B cell (primary cell): ENCODE measurements at regions of chr19 and their contacts with region 1.

Region 1: DNA sequence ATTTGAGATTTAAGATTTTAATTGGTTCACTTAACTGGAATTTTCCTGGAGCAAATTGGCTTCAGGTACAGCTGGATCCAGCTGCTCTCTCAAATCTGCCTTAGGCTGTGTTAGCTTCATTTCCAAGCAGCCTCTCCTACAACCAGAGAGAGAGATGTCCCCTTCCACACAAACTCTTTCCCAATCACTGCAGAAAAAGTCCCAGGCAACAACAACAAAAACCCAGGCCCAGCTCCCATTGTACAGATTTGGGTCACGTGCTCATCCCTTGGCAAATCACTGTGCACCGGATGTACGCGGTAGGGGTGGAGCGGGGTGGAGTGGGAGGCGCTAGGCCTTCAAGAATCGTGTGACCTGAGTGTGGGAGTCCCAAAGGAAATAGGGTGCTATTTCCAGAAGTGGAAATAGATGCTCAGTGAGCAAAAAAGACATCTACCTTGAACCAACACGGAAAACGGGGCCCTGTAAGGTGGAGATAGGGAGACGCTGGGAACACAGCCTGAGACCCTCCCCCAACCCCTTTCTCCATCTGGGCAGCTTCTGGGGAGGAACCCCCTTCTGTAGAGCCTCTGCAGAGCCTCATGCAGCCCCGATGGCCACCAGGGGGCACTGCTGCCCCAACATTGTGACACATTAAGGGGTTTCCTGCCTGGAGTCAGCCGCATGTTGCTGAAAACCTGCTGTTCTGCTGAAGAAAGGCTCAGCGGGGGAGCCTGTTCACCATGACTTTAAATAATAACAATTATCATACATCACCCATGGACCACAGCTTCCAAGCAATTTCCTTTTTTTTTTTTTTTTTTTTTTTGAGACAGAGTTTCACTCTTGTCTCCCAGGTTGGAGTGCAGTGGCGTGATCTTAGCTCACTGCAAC is 25.4 kb downstream of the HPN start:
- DNase-seq: peak; percentile 92
- ATAC-seq: peak; percentile 87
- H3K4me3 ChIP-seq: no peak overlapping the region
- H3K4me3 Mint-ChIP-seq: peak overlapping the region; percentile 39
- H3K27ac ChIP-seq: no peak overlapping the region
- H3K27ac Mint-ChIP-seq: peak overlapping the region; percentile 65
- H3K4me1 ChIP-seq: peaks cover 13 to 29% of the 10 kb centered on the region in 2 donors
- H3K4me1 Mint-ChIP-seq: peaks cover 29% of the 10 kb centered on the region
- H3K27me3 ChIP-seq: no peaks in the 10 kb centered on the region
- H3K27me3 Mint-ChIP-seq: no peaks in the 10 kb centered on the region
- CTCF ChIP-seq: peak; percentile 92

Region 2: GRCh38 chr19:34881982-34882381 is 184.9 kb before region 1 on chr19:
- CTCF ChIA-PET with region 1: no interaction called
- POLR2A ChIA-PET with region 1: no interaction called
- intact Hi-C with region 1: no loop called
- DNase-seq: no peak
- ATAC-seq: no peak
- H3K4me3 ChIP-seq: no peak overlapping the region
- H3K4me3 Mint-ChIP-seq: no peak overlapping the region
- H3K27ac ChIP-seq: no peak overlapping the region
- H3K27ac Mint-ChIP-seq: no peak overlapping the region
- H3K4me1 ChIP-seq: no peaks in the 10 kb centered on the region
- H3K4me1 Mint-ChIP-seq: no peaks in the 10 kb centered on the region
- H3K27me3 ChIP-seq: no peaks in the 10 kb centered on the region
- H3K27me3 Mint-ChIP-seq: peaks cover 28% of the 10 kb centered on the region
- CTCF ChIP-seq: no peak

Region 3: DNA sequence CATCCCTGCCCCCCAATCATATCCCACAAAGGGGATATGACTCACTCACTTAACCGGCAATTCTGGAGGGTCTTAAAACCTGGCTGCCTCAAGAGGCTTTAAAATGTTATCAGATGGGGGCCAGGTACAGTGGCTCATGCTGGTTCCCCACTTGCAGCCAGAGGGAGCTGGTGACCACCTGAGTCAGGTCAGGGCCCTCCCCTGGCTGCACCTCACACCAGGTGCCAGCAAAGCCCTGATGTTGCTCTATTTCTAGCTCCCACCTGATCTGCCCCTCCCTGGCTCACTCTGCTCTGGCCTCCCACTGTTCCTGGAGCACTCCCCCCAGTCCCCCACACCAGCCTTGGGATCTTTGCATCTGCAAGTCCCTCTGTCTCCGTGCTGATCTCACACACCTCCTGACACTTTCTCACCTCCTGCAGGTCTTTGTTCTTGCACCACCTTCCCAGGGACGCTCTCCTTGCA is 11.2 kb before region 1 on chr19:
- CTCF ChIA-PET with region 1: interaction called, 13 read pairs
- POLR2A ChIA-PET with region 1: no interaction called
- intact Hi-C with region 1: no loop called
- DNase-seq: peak; percentile 43
- ATAC-seq: peak; percentile 51
- H3K4me3 ChIP-seq: no peak overlapping the region
- H3K4me3 Mint-ChIP-seq: no peak overlapping the region
- H3K27ac ChIP-seq: no peak overlapping the region
- H3K27ac Mint-ChIP-seq: no peak overlapping the region
- H3K4me1 ChIP-seq: no peaks in the 10 kb centered on the region
- H3K4me1 Mint-ChIP-seq: no peaks in the 10 kb centered on the region
- H3K27me3 ChIP-seq: no peaks in the 10 kb centered on the region
- H3K27me3 Mint-ChIP-seq: peaks cover 9% of the 10 kb centered on the region
- CTCF ChIP-seq: peak; percentile 24

Region 4: DNA sequence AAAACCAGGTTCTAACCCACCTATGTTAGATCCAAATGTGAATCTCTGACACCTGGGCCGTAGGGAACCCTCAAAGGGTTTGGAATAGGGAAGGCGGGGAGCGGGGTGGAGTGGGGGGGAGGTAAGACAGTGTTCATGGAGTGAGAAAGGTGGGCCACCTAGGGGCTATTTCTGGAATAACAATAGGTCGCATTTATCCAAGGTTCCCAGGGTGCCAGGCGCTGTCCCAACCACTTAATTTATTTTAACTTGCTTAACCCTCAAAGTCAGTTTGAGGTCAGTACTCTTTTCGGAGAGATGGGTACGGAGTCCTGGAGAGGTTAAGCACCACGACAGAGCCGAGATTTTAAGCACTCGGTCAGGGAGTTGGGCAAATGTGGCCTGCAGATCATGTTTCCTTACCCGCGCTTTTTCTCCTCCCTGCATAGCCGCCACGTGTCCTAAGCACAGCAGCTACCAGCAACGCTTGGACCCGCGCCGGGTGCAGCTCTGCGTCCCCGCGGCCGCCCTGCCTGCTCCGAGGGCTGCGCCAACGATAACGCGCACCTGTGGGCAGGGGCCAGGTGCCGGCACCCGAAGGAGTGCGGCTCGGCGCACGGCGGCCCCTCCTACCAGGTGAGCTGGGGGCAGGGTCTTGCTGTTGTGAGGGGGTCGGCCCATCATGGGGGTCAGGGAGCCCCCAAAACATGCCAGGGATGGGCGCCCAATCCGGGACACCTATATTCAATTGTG is 23.7 kb after region 1 on chr19:
- CTCF ChIA-PET with region 1: interaction called, 192 read pairs
- POLR2A ChIA-PET with region 1: interaction called, 7 read pairs
- intact Hi-C with region 1: loop called (anchors 1 kb)
- DNase-seq: peak; percentile 78
- ATAC-seq: peak; percentile 68
- H3K4me3 ChIP-seq: peak overlapping the region in 2 of 5 experiments; percentile 15 to 20
- H3K4me3 Mint-ChIP-seq: peak overlapping the region; percentile 70
- H3K27ac ChIP-seq: no peak overlapping the region
- H3K27ac Mint-ChIP-seq: no peak overlapping the region
- H3K4me1 ChIP-seq: peaks cover 50% of the 10 kb centered on the region in 2 donors
- H3K4me1 Mint-ChIP-seq: peaks cover 40% of the 10 kb centered on the region
- H3K27me3 ChIP-seq: no peaks in the 10 kb centered on the region
- H3K27me3 Mint-ChIP-seq: no peaks in the 10 kb centered on the region
- CTCF ChIP-seq: peak; percentile 82

Region 5: DNA sequence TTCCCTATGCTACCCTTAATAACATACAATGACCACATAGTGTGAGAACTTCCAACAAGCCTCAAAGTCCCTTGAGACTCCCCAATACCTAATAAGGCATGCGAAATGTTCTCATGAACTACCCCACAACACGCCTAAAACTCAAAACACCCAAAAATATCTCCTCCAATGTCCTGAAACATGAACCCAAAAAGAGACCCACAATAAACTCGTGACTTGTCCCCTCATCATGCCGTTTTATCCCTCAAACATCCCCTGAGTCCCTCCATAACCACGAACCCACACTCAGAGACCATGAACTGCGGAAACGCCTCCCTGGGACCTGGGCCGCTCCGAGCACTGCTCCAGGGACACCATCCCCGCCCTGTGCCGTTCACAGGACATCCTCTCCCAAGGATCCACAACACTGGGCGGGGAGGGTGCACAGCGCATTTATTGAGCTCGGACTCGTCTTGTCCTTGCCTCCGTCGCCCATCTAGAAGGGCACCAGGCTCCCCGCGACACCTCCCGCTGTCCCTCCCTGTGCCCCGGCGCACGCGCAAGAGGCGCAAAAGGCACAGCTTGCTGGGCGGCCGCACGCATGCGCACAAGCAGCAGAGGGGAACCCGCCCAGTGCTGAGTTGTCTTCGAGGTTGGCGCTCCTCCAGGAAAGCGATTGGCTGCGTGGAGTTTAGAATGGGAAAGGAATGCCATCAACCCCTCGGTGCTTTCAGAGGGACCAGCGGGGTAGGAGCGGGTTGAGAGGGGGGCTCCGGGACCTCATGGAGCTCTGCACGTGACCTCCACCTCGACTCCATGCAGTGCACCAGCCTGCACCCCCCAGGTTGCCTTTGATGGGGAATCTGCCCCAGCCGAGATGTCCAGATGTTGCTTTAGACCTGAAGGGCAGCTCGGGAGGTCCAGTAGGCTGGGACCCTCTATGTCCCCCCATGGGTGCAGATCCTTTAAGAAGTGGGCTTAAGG is 57.5 kb after region 1 on chr19:
- CTCF ChIA-PET with region 1: interaction called, 11 read pairs
- POLR2A ChIA-PET with region 1: no interaction called
- intact Hi-C with region 1: no loop called
- DNase-seq: peak; percentile 87
- ATAC-seq: peak; percentile 92
- H3K4me3 ChIP-seq: peak overlapping the region; percentile 37 to 72 (median 59)
- H3K4me3 Mint-ChIP-seq: peak overlapping the region; percentile 96
- H3K27ac ChIP-seq: peak overlapping the region; percentile 22 to 34
- H3K27ac Mint-ChIP-seq: peak overlapping the region; percentile 95
- H3K4me1 ChIP-seq: peaks cover 10 to 17% of the 10 kb centered on the region in 2 donors
- H3K4me1 Mint-ChIP-seq: peaks cover 15% of the 10 kb centered on the region
- H3K27me3 ChIP-seq: no peaks in the 10 kb centered on the region
- H3K27me3 Mint-ChIP-seq: no peaks in the 10 kb centered on the region
- CTCF ChIP-seq: no peak

Region 6: DNA sequence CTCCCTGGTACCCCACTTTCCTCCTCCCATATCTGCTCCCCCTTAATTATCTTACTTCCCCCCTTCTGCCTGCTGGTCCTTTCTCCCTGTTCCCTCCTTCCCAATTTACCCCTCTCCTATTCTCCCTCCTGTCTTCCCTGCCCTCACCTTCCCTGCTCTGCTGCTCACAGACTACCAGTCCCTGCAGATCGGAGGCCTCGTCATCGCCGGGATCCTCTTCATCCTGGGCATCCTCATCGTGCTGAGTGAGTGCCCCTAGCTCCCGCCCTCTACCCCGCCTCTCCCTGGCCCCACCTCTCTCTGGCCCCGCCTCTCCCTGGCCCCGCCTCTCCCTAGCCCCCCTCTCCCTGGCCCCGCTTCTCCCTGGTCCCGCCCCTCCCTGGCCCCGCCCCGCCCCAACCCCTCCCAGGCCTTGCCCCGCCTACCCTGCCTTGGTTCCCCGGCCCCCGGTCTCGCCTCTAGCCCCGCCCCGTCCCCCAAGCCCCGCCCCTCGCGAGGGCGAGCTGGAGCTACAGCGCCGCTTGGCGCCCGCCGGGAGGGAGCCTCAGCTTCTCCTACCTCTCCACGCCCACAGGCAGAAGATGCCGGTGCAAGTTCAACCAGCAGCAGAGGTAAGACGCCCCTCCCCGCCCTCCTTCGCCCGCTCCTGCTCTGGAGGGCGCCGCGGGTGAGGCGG is 74.2 kb after region 1 on chr19:
- CTCF ChIA-PET with region 1: interaction called, 65 read pairs
- POLR2A ChIA-PET with region 1: no interaction called
- intact Hi-C with region 1: loop called (anchors 1 kb)
- DNase-seq: peak; percentile 87
- ATAC-seq: peak; percentile 86
- H3K4me3 ChIP-seq: peak overlapping the region in 4 of 5 experiments; percentile 43 to 58 (median 52)
- H3K4me3 Mint-ChIP-seq: peak overlapping the region; percentile 92
- H3K27ac ChIP-seq: no peak overlapping the region
- H3K27ac Mint-ChIP-seq: peak overlapping the region; percentile 88
- H3K4me1 ChIP-seq: peaks cover 25 to 52% of the 10 kb centered on the region in 2 donors
- H3K4me1 Mint-ChIP-seq: peaks cover 46% of the 10 kb centered on the region
- H3K27me3 ChIP-seq: peaks cover 0 to 13% (median 3%) of the 10 kb centered on the region in 4 experiments
- H3K27me3 Mint-ChIP-seq: peaks cover 14% of the 10 kb centered on the region
- CTCF ChIP-seq: peak; percentile 35

Region 7: GRCh38 chr19:35357867-35358573 is 291.1 kb after region 1 on chr19 and contains the start of gene FFAR3:
- CTCF ChIA-PET with region 1: interaction called, 10 read pairs
- POLR2A ChIA-PET with region 1: no interaction called
- intact Hi-C with region 1: no loop called
- DNase-seq: no peak
- ATAC-seq: no peak
- H3K4me3 ChIP-seq: no peak within 1 kb of the TSS
- H3K4me3 Mint-ChIP-seq: no peak within 1 kb of the TSS
- H3K27ac ChIP-seq: no peak within 1 kb of the TSS
- H3K27ac Mint-ChIP-seq: no peak within 1 kb of the TSS
- H3K4me1 ChIP-seq: peaks cover under 1 to 1% of the 10 kb centered on the region in 2 donors
- H3K4me1 Mint-ChIP-seq: peaks cover 3% of the 10 kb centered on the region
- H3K27me3 ChIP-seq: peaks cover 0 to 10% (median 0%) of the 10 kb centered on the region in 4 experiments
- H3K27me3 Mint-ChIP-seq: peaks cover 20% of the 10 kb centered on the region
- CTCF ChIP-seq: no peak
- total RNA-seq, gene FFAR3: not detected in 2 replicates